ENCODE measurements at regions of chr2 and their contacts with region 1.

Region 1: GRCh38 chr2:48332286-48332685 is 197.7 kb upstream of the STON1 start:
- DNase-seq: no peak
- ATAC-seq: peak; percentile 66
- H3K4me3 ChIP-seq: no peak overlapping the region
- H3K4me3 Mint-ChIP-seq: peak overlapping the region in 9 of 10 donors; percentile 14 to 69 (median 51)
- H3K27ac ChIP-seq: no peak overlapping the region
- H3K27ac Mint-ChIP-seq: peak overlapping the region in 6 of 9 donors; percentile 26 to 85 (median 41)
- H3K4me1 ChIP-seq: peaks cover 14 to 17% of the 10 kb centered on the region in 2 donors
- H3K4me1 Mint-ChIP-seq: peaks cover 38 to 84% (median 73%) of the 10 kb centered on the region in 7 donors
- H3K27me3 ChIP-seq: no peaks in the 10 kb centered on the region
- H3K27me3 Mint-ChIP-seq: no peaks in the 10 kb centered on the region

Region 2: DNA sequence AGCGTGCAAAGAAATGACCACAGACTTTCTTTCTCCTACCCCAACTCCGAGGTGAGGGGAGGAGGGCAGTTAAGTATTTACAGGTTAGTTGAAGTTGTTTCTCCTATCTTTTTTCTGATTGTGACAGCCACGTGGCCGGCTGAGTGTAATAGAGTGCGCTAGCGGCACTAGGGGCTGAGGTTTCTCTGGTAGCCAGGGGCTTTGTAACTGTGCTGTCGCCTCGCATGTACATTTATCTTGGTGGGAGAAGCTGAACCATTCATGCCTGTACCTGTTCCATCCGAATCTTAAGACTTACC is 16.4 kb before region 1 on chr2:
- CTCF ChIA-PET with region 1: no interaction called
- POLR2A ChIA-PET with region 1: interaction called, 7 read pairs
- intact Hi-C with region 1: loop called in 1 of 2 experiments (anchors 2 kb)
- DNase-seq: peak in 5 of 9 donors; percentile 16 to 35 (median 23)
- ATAC-seq: no peak
- H3K4me3 ChIP-seq: peak overlapping the region; percentile 76
- H3K4me3 Mint-ChIP-seq: peak overlapping the region; percentile 85 to 99 (median 95)
- H3K27ac ChIP-seq: peak overlapping the region; percentile 91
- H3K27ac Mint-ChIP-seq: peak overlapping the region; percentile 93 to 98 (median 96)
- H3K4me1 ChIP-seq: peaks cover 26 to 46% of the 10 kb centered on the region in 2 donors
- H3K4me1 Mint-ChIP-seq: peaks cover 30 to 57% (median 50%) of the 10 kb centered on the region in 7 donors
- H3K27me3 ChIP-seq: no peaks in the 10 kb centered on the region
- H3K27me3 Mint-ChIP-seq: no peaks in the 10 kb centered on the region